ENCODE measurements at regions of chr7 and their contacts with region 1.

Region 1: GRCh38 chr7:24819916-24820689 is 62.8 kb upstream of the GSDME start:
- DNase-seq: peak; percentile 79 to 91 (median 83)
- H3K4me3 ChIP-seq: no peak overlapping the region
- H3K27ac ChIP-seq: peak overlapping the region in 1 of 2 donors; percentile 13
- H3K4me1 ChIP-seq: peaks cover 3% of the 10 kb centered on the region
- H3K27me3 ChIP-seq: no peaks in the 10 kb centered on the region
- CTCF ChIP-seq: peak; percentile 56 to 87 (median 87)
- EP300 ChIP-seq: no peak
- POLR2A ChIP-seq: no peak

Region 2: GRCh38 chr7:24979863-24980533 is 159.9 kb after region 1 on chr7 and contains the start of gene OSBPL3:
- intact Hi-C with region 1: loop called in 2 of 4 experiments (anchors 2 to 5 kb)
- DNase-seq: peak; percentile 93 to 98 (median 96)
- H3K4me3 ChIP-seq: peak within 1 kb of the TSS; percentile 78
- H3K27ac ChIP-seq: peak within 1 kb of the TSS; percentile 65 to 86
- H3K4me1 ChIP-seq: peaks cover 3% of the 10 kb centered on the region
- H3K27me3 ChIP-seq: no peaks in the 10 kb centered on the region
- CTCF ChIP-seq: no peak
- EP300 ChIP-seq: no peak
- POLR2A ChIP-seq: peak; percentile 44
- total RNA-seq, gene OSBPL3: 8.4 to 29.1 (median 13.7) TPM

Region 3: DNA sequence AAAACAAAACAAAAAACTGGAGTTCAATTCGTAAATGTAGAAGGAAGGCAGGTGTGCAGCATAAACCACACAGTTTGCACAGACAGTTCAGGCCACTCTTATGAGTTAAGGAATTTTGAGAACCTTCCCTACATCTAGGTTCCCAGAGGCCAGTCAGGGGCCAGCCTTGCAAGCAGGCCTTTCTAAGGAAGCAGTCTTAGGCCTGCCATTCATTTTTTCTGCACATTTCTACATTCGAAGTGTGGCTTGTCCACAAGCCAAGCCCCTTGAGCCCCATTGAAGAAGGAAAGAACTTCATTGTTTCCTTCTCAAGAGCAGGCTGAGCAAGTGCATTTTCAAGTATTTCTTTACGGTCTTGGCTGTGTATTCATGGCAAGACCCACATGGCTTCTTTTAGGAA is 171.2 kb after region 1 on chr7:
- intact Hi-C with region 1: no loop called
- DNase-seq: no peak
- H3K4me3 ChIP-seq: no peak overlapping the region
- H3K27ac ChIP-seq: no peak overlapping the region
- H3K4me1 ChIP-seq: no peaks in the 10 kb centered on the region
- H3K27me3 ChIP-seq: no peaks in the 10 kb centered on the region
- CTCF ChIP-seq: no peak
- EP300 ChIP-seq: no peak
- POLR2A ChIP-seq: no peak

Region 4: GRCh38 chr7:25069900-25070443 is 249.9 kb after region 1 on chr7:
- intact Hi-C with region 1: loop called (anchors 5 to 10 kb)
- DNase-seq: peak; percentile 45 to 75 (median 51)
- H3K4me3 ChIP-seq: no peak overlapping the region
- H3K27ac ChIP-seq: peak overlapping the region in 1 of 2 donors; percentile 4
- H3K4me1 ChIP-seq: peaks cover 4% of the 10 kb centered on the region
- H3K27me3 ChIP-seq: no peaks in the 10 kb centered on the region
- CTCF ChIP-seq: peak; percentile 75 to 93 (median 81)
- EP300 ChIP-seq: no peak
- POLR2A ChIP-seq: no peak

Region 5: GRCh38 chr7:25087855-25088254 is 267.8 kb after region 1 on chr7:
- intact Hi-C with region 1: loop called in 1 of 4 experiments (anchors 5 kb)
- DNase-seq: no peak
- H3K4me3 ChIP-seq: no peak overlapping the region
- H3K27ac ChIP-seq: no peak overlapping the region
- H3K4me1 ChIP-seq: no peaks in the 10 kb centered on the region
- H3K27me3 ChIP-seq: no peaks in the 10 kb centered on the region
- CTCF ChIP-seq: no peak
- EP300 ChIP-seq: no peak
- POLR2A ChIP-seq: no peak